Esophagus muscularis mucosa (tissue), 4 donors: ENCODE measurements at regions of chr10 and their contacts with region 1.

Region 1: GRCh38 chr10:27654284-27654683 is 91.3 kb downstream of the MKX start:
- DNase-seq: no peak
- H3K4me3 ChIP-seq: no peak overlapping the region
- H3K27ac ChIP-seq: no peak overlapping the region
- H3K4me1 ChIP-seq: no peaks in the 10 kb centered on the region
- H3K27me3 ChIP-seq: no peaks in the 10 kb centered on the region
- CTCF ChIP-seq: no peak
- EP300 ChIP-seq: no peak
- POLR2A ChIP-seq: no peak

Region 2: DNA sequence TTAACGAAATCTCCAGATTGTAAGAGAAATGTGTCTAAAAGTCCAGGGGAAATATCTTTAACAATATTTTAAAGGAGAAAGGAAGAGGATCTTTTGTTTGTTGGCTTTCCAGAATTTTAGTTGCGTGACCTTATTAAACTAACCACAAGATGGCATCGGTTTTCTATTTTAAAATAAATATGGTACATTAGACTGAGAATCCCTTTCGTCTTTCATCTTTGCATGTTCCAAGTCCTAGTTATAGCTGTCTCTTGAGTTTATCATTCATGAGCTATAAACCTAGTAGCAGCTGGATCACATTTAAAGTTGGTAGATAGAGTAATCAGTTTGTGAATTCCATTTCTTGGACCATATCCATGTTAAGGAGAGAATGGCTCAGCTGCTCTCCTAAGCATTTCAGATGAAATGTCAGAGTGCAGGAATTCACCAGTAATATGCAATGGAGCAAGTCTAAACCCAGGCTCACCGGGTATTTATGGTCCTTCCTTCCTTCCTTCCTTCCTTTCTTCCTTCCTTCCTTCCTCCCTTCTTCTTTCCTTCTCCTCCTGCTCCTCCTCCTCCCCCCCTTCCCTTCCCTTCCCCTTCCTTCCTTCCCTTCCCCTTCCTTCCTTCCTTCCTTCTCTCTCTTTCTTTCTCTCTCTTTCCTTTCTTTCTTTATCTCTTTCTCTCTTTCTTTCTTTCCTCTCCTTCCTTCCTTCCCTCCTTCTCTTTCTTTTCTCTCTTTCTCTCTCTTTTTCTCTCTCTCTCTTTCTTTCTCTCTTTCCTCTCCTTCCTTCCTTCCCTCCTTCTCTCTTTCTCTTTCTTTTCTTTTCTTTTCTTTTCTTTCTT is 208.0 kb before region 1 on chr10:
- intact Hi-C with region 1: loop called (anchors 5 kb)
- DNase-seq: no peak
- H3K4me3 ChIP-seq: peak overlapping the region in 1 of 4 donors; percentile 13
- H3K27ac ChIP-seq: no peak overlapping the region
- H3K4me1 ChIP-seq: peaks cover 0 to 4% (median 0%) of the 10 kb centered on the region in 4 donors
- H3K27me3 ChIP-seq: no peaks in the 10 kb centered on the region
- CTCF ChIP-seq: peak; percentile 37 to 50 (median 50)
- EP300 ChIP-seq: no peak
- POLR2A ChIP-seq: no peak

Region 3: DNA sequence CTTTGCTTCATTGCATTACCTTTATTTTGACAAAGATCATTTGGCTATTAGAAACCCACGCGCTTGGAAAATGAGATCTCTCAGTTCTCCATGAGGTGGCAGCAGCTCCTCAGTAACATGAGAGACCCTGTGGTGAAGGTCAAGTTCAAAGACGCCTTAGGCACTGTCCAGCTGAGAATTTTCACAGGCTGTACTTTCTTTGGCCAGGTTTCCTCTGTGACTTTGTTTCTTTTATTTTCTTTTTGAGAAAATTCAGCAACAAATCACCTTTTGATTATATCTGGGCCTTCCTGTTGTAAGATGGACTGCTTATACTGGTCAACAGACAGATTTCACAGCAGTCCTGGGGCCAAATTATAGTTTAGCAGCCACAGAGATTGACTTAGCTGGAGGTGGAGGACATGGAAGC is 95.7 kb before region 1 on chr10:
- intact Hi-C with region 1: loop called (anchors 5 kb)
- DNase-seq: no peak
- H3K4me3 ChIP-seq: no peak overlapping the region
- H3K27ac ChIP-seq: no peak overlapping the region
- H3K4me1 ChIP-seq: peaks cover 0 to 6% (median 2%) of the 10 kb centered on the region in 4 donors
- H3K27me3 ChIP-seq: no peaks in the 10 kb centered on the region
- CTCF ChIP-seq: peak; percentile 66 to 79 (median 75)
- EP300 ChIP-seq: no peak
- POLR2A ChIP-seq: no peak